Activated T-helper 2 cell treated with anti-CD3 and anti-CD28 coated beads, Interferon-gamma antibody, Interleukin-2, Interleukin-4, amounts not matched to agents 10 μg/mL and 5 μg/mL and 100 μg/mL, durations not matched to agents 14 hours and 24 hours and 36 hours (primary cell): ENCODE measurements at regions of chr13 and their contacts with region 1.

Region 1: DNA sequence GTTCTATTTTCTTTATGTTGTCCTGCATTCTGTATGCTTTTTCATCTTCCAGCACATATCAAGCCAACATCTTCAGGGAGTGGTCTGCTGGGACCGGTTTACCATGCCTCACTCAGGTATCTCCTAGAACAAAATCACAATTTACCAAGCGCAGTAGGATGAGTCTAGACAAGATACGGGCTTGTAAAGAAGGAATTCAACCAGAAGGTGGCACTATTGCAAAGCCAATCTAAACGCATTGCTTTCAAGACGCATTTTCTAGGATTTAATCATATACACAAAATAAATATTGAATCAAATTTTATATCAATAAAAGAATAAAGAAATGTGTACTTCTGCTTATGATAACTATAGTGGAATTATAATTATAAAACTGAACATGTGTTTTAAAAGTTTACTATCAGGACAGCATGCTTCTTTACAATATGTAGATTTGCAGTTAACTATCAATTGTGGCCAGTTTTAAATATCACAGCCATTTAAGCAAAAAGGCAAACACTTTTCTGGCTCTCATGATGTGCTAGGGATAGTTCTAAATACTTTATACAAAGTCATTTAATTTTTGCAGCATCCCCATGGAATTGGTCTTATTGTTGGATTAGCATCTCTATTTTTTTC is 16.1 kb upstream of the TPP2 start:
- DNase-seq: no peak
- H3K4me3 Mint-ChIP-seq: no peak overlapping the region
- H3K27ac Mint-ChIP-seq: no peak overlapping the region
- H3K4me1 Mint-ChIP-seq: peaks cover 13% of the 10 kb centered on the region
- H3K27me3 Mint-ChIP-seq: peaks cover 24% of the 10 kb centered on the region

Region 2: DNA sequence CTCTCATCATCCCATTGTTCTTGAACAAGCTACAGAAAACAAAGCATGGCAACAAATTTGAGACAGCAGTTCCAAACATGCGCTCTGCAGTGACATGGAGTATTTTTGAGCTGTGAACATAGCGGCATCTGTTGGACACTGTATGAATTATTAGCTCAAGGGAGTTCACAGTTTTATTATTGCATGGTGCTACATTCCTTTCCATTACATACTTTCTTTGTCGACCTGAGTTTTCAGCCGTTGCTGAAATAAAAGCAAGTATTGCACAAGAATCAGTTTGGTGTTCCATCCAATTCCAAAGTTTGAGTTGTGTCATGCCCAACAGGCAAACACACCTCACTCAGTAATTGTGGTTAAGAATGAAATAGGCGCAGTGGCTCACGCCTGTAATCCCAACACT is 144.3 kb after region 1 on chr13:
- intact Hi-C with region 1: loop called (anchors 5 kb)
- DNase-seq: no peak
- H3K4me3 Mint-ChIP-seq: no peak overlapping the region
- H3K27ac Mint-ChIP-seq: no peak overlapping the region
- H3K4me1 Mint-ChIP-seq: peaks cover 8% of the 10 kb centered on the region
- H3K27me3 Mint-ChIP-seq: peaks cover 27% of the 10 kb centered on the region